ENCODE measurements at regions of chr12 and their contacts with region 1.

Region 1: GRCh38 chr12:112153181-112153893 is 28.0 kb downstream of the TRAFD1 start:
- DNase-seq: no peak
- ATAC-seq: no peak
- H3K4me3 ChIP-seq: no peak overlapping the region
- H3K27ac ChIP-seq: no peak overlapping the region
- H3K4me1 ChIP-seq: peaks cover 3% of the 10 kb centered on the region; the same call in 1 of the 2 replicates
- H3K27me3 ChIP-seq: no peaks in the 10 kb centered on the region
- CTCF ChIP-seq: no peak
- EP300 ChIP-seq: no peak
- POLR2A ChIP-seq: no peak
- RAD21 ChIP-seq: no peak

Region 2: DNA sequence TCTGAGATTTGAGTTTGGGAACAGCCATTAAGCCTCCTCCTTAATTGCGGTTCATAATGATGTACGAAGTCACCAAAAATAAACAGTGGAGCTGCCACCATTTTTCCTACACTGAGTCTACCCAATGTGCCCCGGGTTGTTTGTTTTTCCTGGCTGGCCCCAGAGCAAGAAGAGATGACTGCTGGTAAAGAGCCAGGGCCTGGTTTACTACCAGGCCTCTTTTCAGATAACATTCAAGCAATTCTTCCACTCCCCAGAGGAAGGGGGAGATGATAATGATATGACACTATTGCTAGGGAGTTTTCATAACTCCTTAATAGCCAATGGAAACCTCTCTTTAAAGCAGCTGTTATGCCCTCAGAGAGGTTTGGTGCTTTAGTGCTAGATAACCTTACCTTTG is 509.9 kb before region 1 on chr12:
- CTCF ChIA-PET with region 1: no interaction called
- POLR2A ChIA-PET with region 1: no interaction called
- RAD21 ChIA-PET with region 1: no interaction called
- SMC1A ChIA-PET with region 1: no interaction called
- in situ Hi-C with region 1: no loop called
- intact Hi-C with region 1: no loop called
- DNase-seq: no peak
- ATAC-seq: no peak
- H3K4me3 ChIP-seq: no peak overlapping the region
- H3K27ac ChIP-seq: no peak overlapping the region
- H3K4me1 ChIP-seq: no peaks in the 10 kb centered on the region
- H3K27me3 ChIP-seq: no peaks in the 10 kb centered on the region
- CTCF ChIP-seq: no peak
- EP300 ChIP-seq: no peak
- POLR2A ChIP-seq: no peak
- RAD21 ChIP-seq: no peak

Region 3: GRCh38 chr12:112046003-112046402 is 107.3 kb before region 1 on chr12:
- CTCF ChIA-PET with region 1: no interaction called
- POLR2A ChIA-PET with region 1: no interaction called
- RAD21 ChIA-PET with region 1: no interaction called
- SMC1A ChIA-PET with region 1: no interaction called
- in situ Hi-C with region 1: no loop called
- intact Hi-C with region 1: no loop called
- DNase-seq: no peak
- ATAC-seq: no peak
- H3K4me3 ChIP-seq: no peak overlapping the region
- H3K27ac ChIP-seq: no peak overlapping the region
- H3K4me1 ChIP-seq: no peaks in the 10 kb centered on the region
- H3K27me3 ChIP-seq: no peaks in the 10 kb centered on the region
- CTCF ChIP-seq: no peak
- EP300 ChIP-seq: no peak
- POLR2A ChIP-seq: no peak
- RAD21 ChIP-seq: no peak

Region 4: DNA sequence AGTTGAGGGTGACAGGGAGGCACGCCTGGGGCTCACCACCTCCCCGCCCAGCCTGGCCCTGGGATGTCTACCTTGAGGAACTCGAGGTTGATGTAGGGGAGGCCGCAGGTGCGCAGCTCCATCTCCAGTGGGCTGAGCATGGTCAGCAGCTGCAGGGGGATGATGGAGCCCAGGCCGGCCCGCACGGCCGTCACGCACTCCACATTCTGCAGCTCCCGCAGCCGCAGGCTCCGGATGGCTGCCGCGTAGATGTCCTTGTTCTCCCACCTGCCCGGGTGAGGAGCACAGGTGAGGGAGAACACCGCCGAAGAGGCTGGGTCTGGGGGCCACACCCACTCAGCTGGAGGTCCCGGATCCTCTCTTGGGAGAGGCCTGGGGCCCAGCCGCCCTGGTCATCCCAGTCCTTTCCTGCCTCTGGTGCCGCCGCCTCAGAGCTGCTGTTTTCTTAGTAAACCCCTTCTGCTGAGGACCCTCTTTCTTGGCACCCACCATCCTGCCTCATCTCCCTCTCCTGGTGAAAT is 10.2 kb after region 1 on chr12:
- CTCF ChIA-PET with region 1: no interaction called
- POLR2A ChIA-PET with region 1: no interaction called
- RAD21 ChIA-PET with region 1: no interaction called
- SMC1A ChIA-PET with region 1: no interaction called
- in situ Hi-C with region 1: no loop called
- intact Hi-C with region 1: no loop called
- DNase-seq: no peak
- ATAC-seq: no peak
- H3K4me3 ChIP-seq: no peak overlapping the region
- H3K27ac ChIP-seq: no peak overlapping the region
- H3K4me1 ChIP-seq: no peaks in the 10 kb centered on the region
- H3K27me3 ChIP-seq: no peaks in the 10 kb centered on the region
- CTCF ChIP-seq: no peak
- EP300 ChIP-seq: no peak
- POLR2A ChIP-seq: no peak
- RAD21 ChIP-seq: no peak

Region 5: GRCh38 chr12:112183141-112184021 is 30.0 kb after region 1 on chr12:
- CTCF ChIA-PET with region 1: no interaction called
- POLR2A ChIA-PET with region 1: no interaction called
- RAD21 ChIA-PET with region 1: no interaction called
- SMC1A ChIA-PET with region 1: no interaction called
- in situ Hi-C with region 1: no loop called
- intact Hi-C with region 1: loop called (anchors 2 kb)
- DNase-seq: peak; percentile 68
- ATAC-seq: peak; percentile 76
- H3K4me3 ChIP-seq: 0 out of 2 replicates have a peak overlapping the region, but pooled peaks have one; percentile 1
- H3K27ac ChIP-seq: peak overlapping the region; percentile 73
- H3K4me1 ChIP-seq: peaks cover 17% of the 10 kb centered on the region
- H3K27me3 ChIP-seq: no peaks in the 10 kb centered on the region
- CTCF ChIP-seq: no peak
- EP300 ChIP-seq: 0 out of 4 replicates have a peak, but pooled peaks of 1 of the 2 experiments have one; percentile 8
- POLR2A ChIP-seq: no peak
- RAD21 ChIP-seq: no peak

Region 6: GRCh38 chr12:112303004-112303403 is 149.7 kb after region 1 on chr12:
- CTCF ChIA-PET with region 1: no interaction called
- POLR2A ChIA-PET with region 1: no interaction called
- RAD21 ChIA-PET with region 1: no interaction called
- SMC1A ChIA-PET with region 1: no interaction called
- in situ Hi-C with region 1: no loop called
- intact Hi-C with region 1: no loop called
- DNase-seq: peak; percentile 91
- ATAC-seq: peak; percentile 100
- H3K4me3 ChIP-seq: no peak overlapping the region
- H3K27ac ChIP-seq: peak overlapping the region; percentile 91
- H3K4me1 ChIP-seq: peaks cover 16% of the 10 kb centered on the region
- H3K27me3 ChIP-seq: no peaks in the 10 kb centered on the region
- CTCF ChIP-seq: no peak
- EP300 ChIP-seq: peak; percentile 55 to 65; a peak in 3 of 4 replicates
- POLR2A ChIP-seq: peak; percentile 59
- RAD21 ChIP-seq: no peak; the same call in 1 of the 2 replicates